Activated T-helper 2 cell treated with anti-CD3 and anti-CD28 coated beads, Interferon-gamma antibody, Interleukin-2, Interleukin-4, amounts not matched to agents 10 μg/mL and 5 μg/mL and 100 μg/mL, durations not matched to agents 14 hours and 24 hours and 36 hours (primary cell): ENCODE measurements at regions of chr3 and their contacts with region 1.

Region 1: GRCh38 chr3:133448478-133449122 is 48.7 kb downstream of the BFSP2 start:
- DNase-seq: peak; percentile 34
- H3K4me3 Mint-ChIP-seq: peak overlapping the region; percentile 39
- H3K27ac Mint-ChIP-seq: peak overlapping the region; percentile 76
- H3K4me1 Mint-ChIP-seq: peaks cover 35% of the 10 kb centered on the region
- H3K27me3 Mint-ChIP-seq: no peaks in the 10 kb centered on the region

Region 2: DNA sequence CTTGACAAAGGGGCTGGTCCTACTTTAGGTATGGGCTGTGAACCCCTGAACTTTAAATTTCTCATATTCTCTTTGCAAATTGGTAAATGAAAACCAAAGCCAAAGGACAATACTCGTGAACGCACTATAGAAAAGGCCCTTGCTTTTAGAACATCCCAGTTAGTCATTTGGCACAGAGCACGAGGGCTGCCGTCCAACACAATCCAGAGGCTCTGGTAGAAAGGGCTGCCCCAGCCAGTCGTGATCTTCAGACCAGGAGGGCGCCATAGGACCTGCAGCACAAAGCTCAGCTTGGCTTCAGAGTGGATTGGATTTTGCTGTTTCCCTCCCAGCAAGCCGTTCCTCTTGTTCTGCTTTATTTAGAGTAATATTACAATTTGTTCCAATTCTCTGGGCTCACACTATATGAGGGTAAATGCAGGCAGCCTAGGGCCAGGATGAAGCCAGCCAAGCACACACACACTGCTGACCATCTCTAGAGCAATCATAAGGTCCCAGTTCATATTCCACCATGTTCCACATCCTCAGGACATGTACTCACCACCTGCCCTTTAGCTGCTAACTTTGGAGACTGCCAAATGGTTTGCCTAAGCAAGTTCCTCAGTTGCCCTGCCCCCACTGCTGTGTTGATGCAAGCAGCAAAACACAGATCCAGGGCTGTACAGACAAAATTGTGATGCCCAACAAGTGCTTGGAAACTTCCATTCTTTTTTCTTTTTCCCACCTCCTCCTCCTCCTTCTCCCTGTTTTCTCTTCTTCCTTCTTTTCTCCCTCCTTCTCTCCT is 54.7 kb before region 1 on chr3:
- intact Hi-C with region 1: no loop called
- DNase-seq: no peak
- H3K4me3 Mint-ChIP-seq: no peak overlapping the region
- H3K27ac Mint-ChIP-seq: no peak overlapping the region
- H3K4me1 Mint-ChIP-seq: peaks cover 5% of the 10 kb centered on the region
- H3K27me3 Mint-ChIP-seq: peaks cover 5% of the 10 kb centered on the region

Region 3: DNA sequence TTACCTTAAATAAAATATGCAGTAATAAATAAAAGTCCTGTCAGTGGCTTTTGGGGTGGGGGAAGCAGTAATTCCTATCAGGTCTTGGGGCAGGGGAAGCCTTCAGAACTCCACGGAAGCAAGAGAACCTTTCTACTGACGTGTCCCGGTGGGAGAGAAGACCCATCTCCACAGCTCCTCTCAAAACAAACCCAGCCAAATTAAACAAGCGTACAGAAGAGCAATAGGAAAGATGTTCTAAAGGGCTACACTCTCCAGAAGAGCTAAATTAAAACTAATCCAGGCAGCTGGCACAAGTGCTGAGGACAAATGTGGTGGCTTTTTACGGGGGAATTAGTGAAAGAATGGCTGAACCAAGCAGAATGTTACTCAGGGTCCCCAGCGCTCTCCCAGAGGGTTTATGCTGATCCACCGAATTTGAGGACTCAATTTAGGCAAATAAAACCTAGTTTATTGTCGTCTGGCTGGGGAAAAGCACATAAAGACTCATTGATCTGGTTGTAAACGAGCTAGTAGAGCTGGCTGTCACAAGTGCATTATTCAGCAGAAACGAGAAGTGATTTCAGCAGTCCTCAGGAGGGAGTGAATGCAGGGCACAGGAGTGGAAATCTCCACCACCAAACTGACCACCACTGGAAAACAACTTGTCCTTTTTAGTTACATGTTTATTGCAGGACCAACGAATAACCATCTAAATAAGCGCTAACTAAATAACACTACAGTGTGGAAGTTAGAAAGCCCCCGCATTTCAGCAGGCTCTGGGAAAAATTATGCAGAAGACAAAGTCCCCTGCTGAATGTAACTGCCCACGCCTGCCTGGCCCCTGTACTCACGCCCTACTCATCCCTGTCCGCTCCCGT is 35.2 kb before region 1 on chr3:
- intact Hi-C with region 1: no loop called
- DNase-seq: no peak
- H3K4me3 Mint-ChIP-seq: no peak overlapping the region
- H3K27ac Mint-ChIP-seq: peak overlapping the region; percentile 5
- H3K4me1 Mint-ChIP-seq: peaks cover 6% of the 10 kb centered on the region
- H3K27me3 Mint-ChIP-seq: peaks cover 15% of the 10 kb centered on the region

Region 4: GRCh38 chr3:133475245-133476010 is 26.8 kb after region 1 on chr3:
- intact Hi-C with region 1: loop called (anchors 5 kb)
- DNase-seq: peak; percentile 37
- H3K4me3 Mint-ChIP-seq: peak overlapping the region; percentile 4
- H3K27ac Mint-ChIP-seq: peak overlapping the region; percentile 34
- H3K4me1 Mint-ChIP-seq: peaks cover 53% of the 10 kb centered on the region
- H3K27me3 Mint-ChIP-seq: no peaks in the 10 kb centered on the region

Region 5: DNA sequence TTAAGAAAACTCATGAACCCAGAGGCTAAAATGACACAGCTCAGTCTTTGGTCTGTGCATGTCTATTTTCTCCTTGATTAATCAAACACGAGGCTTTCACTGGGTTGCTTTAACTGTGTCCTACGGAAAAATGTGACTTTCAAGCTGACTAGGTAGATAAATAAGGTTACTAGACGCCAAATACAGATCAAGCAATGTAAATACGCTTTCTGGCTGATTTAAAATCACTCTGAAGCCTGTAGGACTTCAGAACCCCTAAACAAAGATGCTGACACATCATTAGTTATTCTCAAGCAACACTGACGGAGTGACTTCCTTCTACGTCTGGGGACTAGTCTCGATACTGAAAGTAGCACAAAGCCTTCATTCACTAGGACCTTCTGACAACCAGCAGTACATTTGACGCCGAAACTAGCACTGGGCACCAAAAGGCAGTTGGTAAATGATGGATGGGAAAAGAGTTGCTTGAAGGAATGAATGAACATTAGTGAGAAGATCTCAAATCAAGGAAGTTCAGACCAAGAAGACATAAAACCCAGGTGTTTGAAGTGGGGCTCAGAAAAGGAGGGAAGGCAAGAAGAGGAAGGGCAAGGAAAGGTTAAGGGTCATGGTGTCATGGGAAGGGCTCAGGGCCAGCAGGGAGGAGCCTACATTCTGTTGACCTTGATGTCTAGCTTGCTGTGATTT is 57.8 kb after region 1 on chr3:
- intact Hi-C with region 1: loop called (anchors 1 kb)
- DNase-seq: peak; percentile 35
- H3K4me3 Mint-ChIP-seq: peak overlapping the region; percentile 35
- H3K27ac Mint-ChIP-seq: peak overlapping the region; percentile 89
- H3K4me1 Mint-ChIP-seq: peaks cover 19% of the 10 kb centered on the region
- H3K27me3 Mint-ChIP-seq: no peaks in the 10 kb centered on the region

Region 6: DNA sequence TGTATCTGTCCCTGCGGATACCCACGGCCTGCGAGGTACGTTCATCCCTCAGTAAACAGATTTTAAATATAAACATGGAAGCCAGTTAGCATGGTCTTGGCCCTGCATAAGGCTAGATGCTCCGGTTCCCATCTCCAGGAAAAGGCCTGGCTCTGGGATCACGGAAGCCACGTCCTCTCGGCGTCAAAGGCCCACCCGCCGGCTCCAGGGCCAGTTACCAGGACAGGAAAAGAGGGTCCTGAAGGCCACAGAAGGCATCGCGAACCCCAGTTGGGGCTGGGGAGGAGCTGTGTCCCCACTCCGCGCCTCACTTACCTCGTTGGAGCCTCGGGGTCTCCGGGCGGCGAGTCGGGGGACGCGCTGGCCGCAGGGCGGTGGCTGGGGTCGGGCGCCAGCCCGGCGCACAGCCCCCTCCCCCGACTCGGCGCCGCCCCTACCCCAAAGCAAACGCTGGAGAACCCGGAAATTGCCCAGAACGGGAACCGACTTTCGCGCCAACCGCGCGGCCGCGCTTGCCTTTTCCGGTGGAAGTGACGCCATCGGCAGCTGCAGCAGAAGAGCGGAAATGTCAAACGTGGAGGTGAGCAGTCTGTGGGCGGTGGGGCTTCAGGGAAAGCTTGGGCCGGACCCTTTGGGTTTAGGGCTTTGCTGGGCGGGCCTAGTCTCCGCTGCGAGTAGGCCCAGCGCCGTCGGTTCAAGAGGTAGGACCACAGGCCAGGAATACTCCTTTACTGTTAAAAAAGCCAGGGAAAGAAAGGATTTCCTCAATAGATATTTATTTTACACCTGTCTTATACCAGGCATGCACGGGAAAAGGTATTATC is 213.1 kb after region 1 on chr3 and contains the start of gene TOPBP1:
- intact Hi-C with region 1: loop called (anchors 5 kb)
- DNase-seq: peak; percentile 86
- H3K4me3 Mint-ChIP-seq: peak within 1 kb of the TSS; percentile 99
- H3K27ac Mint-ChIP-seq: peak within 1 kb of the TSS; percentile 97
- H3K4me1 Mint-ChIP-seq: peaks cover 33% of the 10 kb centered on the region
- H3K27me3 Mint-ChIP-seq: no peaks in the 10 kb centered on the region
- total RNA-seq, gene TOPBP1: 90.6 and 91.2 TPM in 2 replicates